CD8-positive, alpha-beta memory T cell (primary cell): ENCODE measurements at regions of chr6 and their contacts with region 1.

Region 1: GRCh38 chr6:25017932-25018567 is 82.3 kb upstream of the RIPOR2 start:
- DNase-seq: peak; percentile 67 to 86 (median 72)
- H3K4me3 ChIP-seq: no peak overlapping the region
- H3K4me3 Mint-ChIP-seq: peak overlapping the region in 3 of 7 donors; percentile 13 to 41 (median 22)
- H3K27ac ChIP-seq: no peak overlapping the region
- H3K27ac Mint-ChIP-seq: peak overlapping the region in 7 of 8 donors; percentile 43 to 97 (median 75)
- H3K4me1 ChIP-seq: peaks cover 29% of the 10 kb centered on the region
- H3K4me1 Mint-ChIP-seq: peaks cover 40 to 54% (median 48%) of the 10 kb centered on the region in 3 donors
- H3K27me3 ChIP-seq: no peaks in the 10 kb centered on the region
- H3K27me3 Mint-ChIP-seq: no peaks in the 10 kb centered on the region

Region 2: DNA sequence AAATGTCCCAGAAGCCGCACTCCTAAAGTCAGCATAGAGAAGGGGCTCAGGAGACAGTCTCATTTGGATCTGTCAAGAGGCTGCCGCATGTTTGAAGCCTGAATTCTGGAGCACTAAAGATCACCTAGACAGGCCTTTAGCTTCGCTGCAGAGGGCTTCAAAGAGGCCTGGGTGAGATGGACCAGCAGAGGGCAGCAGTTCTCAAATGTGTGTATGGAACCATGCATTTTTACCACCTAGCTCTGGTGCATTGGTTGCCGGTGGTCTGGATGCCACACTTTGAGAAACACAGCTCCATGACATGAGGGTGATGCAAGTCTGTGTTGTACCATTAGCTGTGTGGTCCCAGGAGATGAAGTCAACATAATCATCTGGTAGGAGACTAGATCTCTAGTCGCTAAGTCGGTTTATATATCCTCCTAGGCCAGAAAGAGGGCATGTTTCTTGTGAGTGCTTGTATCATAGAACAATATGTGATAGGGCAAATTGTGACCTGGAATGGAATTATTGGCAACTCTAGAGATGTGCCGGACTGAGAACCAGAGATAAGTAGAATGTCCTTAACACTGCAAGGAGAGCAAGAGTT is 436.9 kb before region 1 on chr6:
- CTCF ChIA-PET with region 1: interaction called, 13 read pairs
- POLR2A ChIA-PET with region 1: no interaction called
- DNase-seq: peak; percentile 55 to 83 (median 67)
- H3K4me3 ChIP-seq: no peak overlapping the region
- H3K4me3 Mint-ChIP-seq: no peak overlapping the region
- H3K27ac ChIP-seq: no peak overlapping the region
- H3K27ac Mint-ChIP-seq: no peak overlapping the region
- H3K4me1 ChIP-seq: peaks cover 5% of the 10 kb centered on the region
- H3K4me1 Mint-ChIP-seq: peaks cover 4 to 6% (median 4%) of the 10 kb centered on the region in 3 donors
- H3K27me3 ChIP-seq: no peaks in the 10 kb centered on the region
- H3K27me3 Mint-ChIP-seq: peaks cover 0 to 8% of the 10 kb centered on the region in 2 donors

Region 3: GRCh38 chr6:24867104-24867703 is 150.8 kb before region 1 on chr6:
- CTCF ChIA-PET with region 1: interaction called, 13 read pairs
- POLR2A ChIA-PET with region 1: no interaction called
- DNase-seq: no peak
- H3K4me3 ChIP-seq: no peak overlapping the region
- H3K4me3 Mint-ChIP-seq: peak overlapping the region in 1 of 7 donors; percentile 32
- H3K27ac ChIP-seq: no peak overlapping the region
- H3K27ac Mint-ChIP-seq: peak overlapping the region; percentile 32 to 90 (median 73)
- H3K4me1 ChIP-seq: peaks cover 87% of the 10 kb centered on the region
- H3K4me1 Mint-ChIP-seq: peaks cover 58 to 73% (median 66%) of the 10 kb centered on the region in 3 donors
- H3K27me3 ChIP-seq: no peaks in the 10 kb centered on the region
- H3K27me3 Mint-ChIP-seq: no peaks in the 10 kb centered on the region

Region 4: GRCh38 chr6:25006565-25007001 is 11.5 kb before region 1 on chr6:
- CTCF ChIA-PET with region 1: interaction called, 10 read pairs
- POLR2A ChIA-PET with region 1: interaction called, 3 read pairs
- DNase-seq: peak in 3 of 5 donors; percentile 25 to 36 (median 36)
- H3K4me3 ChIP-seq: peak overlapping the region; percentile 32
- H3K4me3 Mint-ChIP-seq: peak overlapping the region in 6 of 7 donors; percentile 50 to 88 (median 66)
- H3K27ac ChIP-seq: peak overlapping the region; percentile 49
- H3K27ac Mint-ChIP-seq: peak overlapping the region; percentile 22 to 96 (median 86)
- H3K4me1 ChIP-seq: peaks cover 48% of the 10 kb centered on the region
- H3K4me1 Mint-ChIP-seq: peaks cover 68 to 72% (median 72%) of the 10 kb centered on the region in 3 donors
- H3K27me3 ChIP-seq: no peaks in the 10 kb centered on the region
- H3K27me3 Mint-ChIP-seq: no peaks in the 10 kb centered on the region

Region 5: GRCh38 chr6:25042036-25042521 is 24.0 kb after region 1 on chr6:
- CTCF ChIA-PET with region 1: interaction called, 17 read pairs
- POLR2A ChIA-PET with region 1: no interaction called
- DNase-seq: peak; percentile 38 to 68 (median 52)
- H3K4me3 ChIP-seq: peak overlapping the region; percentile 85
- H3K4me3 Mint-ChIP-seq: peak overlapping the region; percentile 94 to 99 (median 96)
- H3K27ac ChIP-seq: peak overlapping the region; percentile 67
- H3K27ac Mint-ChIP-seq: peak overlapping the region; percentile 93 to 100 (median 98)
- H3K4me1 ChIP-seq: peaks cover 55% of the 10 kb centered on the region
- H3K4me1 Mint-ChIP-seq: peaks cover 57 to 66% (median 64%) of the 10 kb centered on the region in 3 donors
- H3K27me3 ChIP-seq: no peaks in the 10 kb centered on the region
- H3K27me3 Mint-ChIP-seq: no peaks in the 10 kb centered on the region

Region 6: DNA sequence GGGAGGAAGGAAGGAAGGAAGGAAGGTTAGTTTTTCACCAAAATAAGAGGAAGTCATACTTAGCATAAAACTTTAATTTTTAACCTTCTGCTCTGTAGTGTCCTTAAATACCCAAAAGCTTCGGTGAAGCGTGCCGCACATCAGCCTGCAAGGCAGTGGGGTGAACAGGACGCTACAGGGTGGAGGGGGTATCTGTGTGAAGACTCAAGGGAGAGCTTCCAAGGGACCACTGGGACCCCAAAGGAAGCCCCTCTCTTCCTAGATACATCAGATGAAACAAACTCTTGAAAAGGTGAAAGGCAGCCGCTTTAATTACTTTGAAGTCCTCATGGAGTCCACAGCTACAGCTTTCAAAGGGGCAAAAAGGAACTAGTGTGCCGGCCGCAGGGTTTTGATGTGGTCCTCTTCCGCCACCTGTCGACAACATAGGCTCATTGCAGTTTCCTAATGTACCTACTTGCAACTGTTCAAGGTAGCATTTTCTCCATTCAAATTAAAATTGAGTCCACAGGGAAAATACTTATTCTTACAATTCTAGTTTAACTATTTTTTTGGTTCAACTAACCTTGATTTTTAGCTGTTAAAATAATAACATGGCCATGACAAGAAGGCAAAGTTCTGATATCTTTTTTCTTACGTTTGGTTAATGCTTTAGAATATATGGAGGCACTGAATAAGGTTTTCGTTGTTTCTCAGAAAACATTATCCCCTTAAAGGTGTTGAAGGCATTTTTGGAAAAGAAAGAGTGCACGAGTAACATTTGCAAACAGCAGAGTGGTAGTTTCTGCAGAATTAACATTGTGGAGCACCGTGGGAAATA is 52.7 kb after region 1 on chr6:
- CTCF ChIA-PET with region 1: interaction called, 23 read pairs
- POLR2A ChIA-PET with region 1: no interaction called
- DNase-seq: peak; percentile 70 to 87 (median 79)
- H3K4me3 ChIP-seq: no peak overlapping the region
- H3K4me3 Mint-ChIP-seq: peak overlapping the region in 6 of 7 donors; percentile 50 to 86 (median 74)
- H3K27ac ChIP-seq: no peak overlapping the region
- H3K27ac Mint-ChIP-seq: peak overlapping the region in 7 of 8 donors; percentile 52 to 89 (median 81)
- H3K4me1 ChIP-seq: no peaks in the 10 kb centered on the region
- H3K4me1 Mint-ChIP-seq: peaks cover 5 to 9% (median 5%) of the 10 kb centered on the region in 3 donors
- H3K27me3 ChIP-seq: no peaks in the 10 kb centered on the region
- H3K27me3 Mint-ChIP-seq: no peaks in the 10 kb centered on the region

Region 7: GRCh38 chr6:25801436-25801835 is 783.4 kb after region 1 on chr6:
- CTCF ChIA-PET with region 1: no interaction called
- POLR2A ChIA-PET with region 1: no interaction called
- DNase-seq: no peak
- H3K4me3 ChIP-seq: no peak overlapping the region
- H3K4me3 Mint-ChIP-seq: no peak overlapping the region
- H3K27ac ChIP-seq: no peak overlapping the region
- H3K27ac Mint-ChIP-seq: no peak overlapping the region
- H3K4me1 ChIP-seq: no peaks in the 10 kb centered on the region
- H3K4me1 Mint-ChIP-seq: no peaks in the 10 kb centered on the region
- H3K27me3 ChIP-seq: no peaks in the 10 kb centered on the region
- H3K27me3 Mint-ChIP-seq: peaks cover 14 to 41% of the 10 kb centered on the region in 2 donors